Motor neuron (in vitro differentiated cells): ENCODE measurements at regions of chr2 and their contacts with region 1.

Region 1: DNA sequence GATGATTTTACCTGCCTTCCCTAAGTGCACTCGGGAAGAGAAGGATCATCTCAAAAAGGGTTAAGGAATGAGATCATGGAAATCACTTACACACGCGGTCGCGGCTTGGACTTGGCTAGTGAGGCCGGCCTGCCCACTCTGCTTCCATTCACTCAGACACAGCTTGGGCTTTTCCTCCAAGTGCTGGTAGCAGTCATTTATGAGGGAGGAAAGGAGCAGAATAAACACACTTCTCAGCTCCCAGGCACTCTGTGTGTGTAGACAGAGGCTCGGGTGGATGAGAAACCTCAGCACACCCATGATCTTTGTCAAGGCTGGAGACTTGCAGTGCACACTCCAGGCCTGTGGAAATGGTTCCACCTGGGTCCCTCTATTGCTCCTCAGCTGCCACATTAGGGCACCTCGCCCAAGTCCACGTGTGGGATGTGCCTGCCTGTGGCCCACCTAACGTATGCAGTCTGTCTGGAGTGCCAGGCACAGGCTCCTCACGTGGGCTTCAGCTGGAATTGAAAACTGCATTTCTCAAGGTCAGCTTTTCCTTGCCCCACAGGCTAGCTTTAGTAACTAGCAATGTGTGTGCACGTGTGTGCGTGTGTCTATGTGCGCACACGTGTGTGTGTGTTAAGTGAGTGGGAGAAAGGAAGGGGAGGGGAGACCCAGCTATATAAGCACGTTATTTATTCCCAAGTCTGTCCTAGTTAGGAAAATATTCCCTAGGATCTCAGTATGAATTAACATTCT is 288.4 kb downstream of the SOX11 start:
- ATAC-seq: peak in 5 of 8 experiments; percentile 0 to 13 (median 5)
- H3K4me3 ChIP-seq: peak overlapping the region; percentile 26 to 49 (median 40)
- H3K27ac ChIP-seq: peak overlapping the region; percentile 94 to 99
- H3K4me1 ChIP-seq: peaks cover 55 to 71% of the 10 kb centered on the region in 2 donors

Region 2: DNA sequence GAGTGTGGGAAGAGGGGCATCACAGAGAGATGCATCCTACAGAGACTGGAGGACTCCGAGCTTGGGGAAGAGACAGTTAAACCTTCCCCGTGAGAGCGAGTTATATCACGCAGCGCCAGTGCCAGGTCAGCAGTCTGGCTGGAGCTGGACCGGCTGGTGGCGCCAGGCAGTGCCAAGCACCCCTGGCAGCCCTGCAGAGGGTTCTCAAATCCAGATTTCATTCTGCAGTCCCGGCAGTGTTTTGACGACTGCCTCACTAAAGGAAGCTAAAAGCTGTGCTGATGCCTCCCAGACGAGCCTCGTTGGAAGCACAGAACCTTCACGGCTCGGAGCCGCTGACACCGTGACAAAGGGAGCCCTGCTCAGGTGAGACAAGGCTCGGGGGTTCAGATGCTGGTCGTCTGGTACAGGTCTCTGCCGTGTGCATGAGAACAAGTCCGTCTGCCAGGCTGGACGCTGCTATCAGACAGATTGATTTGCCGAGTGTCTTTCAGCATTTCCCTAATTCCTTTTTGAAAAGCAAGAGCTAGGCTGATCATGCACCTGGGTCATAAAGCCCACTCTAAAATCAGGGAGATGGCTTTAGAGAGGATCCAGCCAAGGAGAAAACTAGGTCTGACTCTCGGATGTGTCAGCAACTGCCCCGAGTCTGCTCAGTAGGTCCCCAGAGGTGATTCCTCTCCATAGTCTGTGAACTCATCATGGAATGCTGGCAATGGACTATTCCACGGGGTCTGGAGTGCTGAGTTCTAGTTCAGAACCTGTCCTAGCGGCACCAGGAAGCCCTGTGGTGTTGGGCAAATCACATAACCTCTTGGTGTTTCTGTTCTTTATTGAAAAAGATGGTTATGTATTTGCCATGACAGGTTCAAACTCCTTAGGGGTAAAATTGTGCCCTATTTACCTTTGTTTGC is 47.8 kb before region 1 on chr2:
- in situ Hi-C with region 1: no loop called
- ATAC-seq: no peak
- H3K4me3 ChIP-seq: no peak overlapping the region
- H3K27ac ChIP-seq: no peak overlapping the region
- H3K4me1 ChIP-seq: peaks cover 9% of the 10 kb centered on the region in 2 donors

Region 3: DNA sequence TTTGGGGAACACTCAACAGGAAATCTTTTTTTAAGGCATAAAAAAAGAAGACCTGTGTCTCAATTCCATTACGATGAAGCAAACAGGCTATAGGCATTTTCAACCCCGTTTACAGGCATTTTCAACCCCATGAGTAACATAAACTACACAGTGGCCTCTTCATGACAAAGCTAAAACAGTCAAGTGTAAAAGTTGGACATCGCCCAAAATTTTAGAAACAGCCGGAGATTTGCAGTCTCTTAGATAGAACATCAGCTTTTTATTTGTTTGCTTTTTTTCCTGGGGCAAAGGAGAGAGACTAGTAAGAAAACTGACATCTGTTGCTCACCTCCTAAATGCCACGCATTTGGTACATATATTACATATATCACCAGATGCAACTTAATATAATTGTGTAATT is 711.4 kb after region 1 on chr2:
- in situ Hi-C with region 1: no loop called
- ATAC-seq: no peak
- H3K4me3 ChIP-seq: no peak overlapping the region
- H3K27ac ChIP-seq: no peak overlapping the region
- H3K4me1 ChIP-seq: no peaks in the 10 kb centered on the region

Region 4: GRCh38 chr2:6773007-6773693 is 792.5 kb after region 1 on chr2:
- in situ Hi-C with region 1: loop called in 1 of 9 experiments (anchors 25 kb)
- ATAC-seq: peak; percentile 75 to 97 (median 82)
- H3K4me3 ChIP-seq: peak overlapping the region; percentile 19 to 39 (median 26)
- H3K27ac ChIP-seq: peak overlapping the region; percentile 84 to 94
- H3K4me1 ChIP-seq: peaks cover 25 to 26% of the 10 kb centered on the region in 2 donors